H1 (cell line): ENCODE measurements at regions of chr13 and their contacts with region 1.

Region 1: GRCh38 chr13:51286135-51287002 is 53.1 kb upstream of the SERPINE3 start:
- DNase-seq: peak; percentile 63 to 96
- H3K4me3 ChIP-seq: no peak overlapping the region
- H3K27ac ChIP-seq: no peak overlapping the region
- H3K4me1 ChIP-seq: peaks cover 0 to 3% (median 0%) of the 10 kb centered on the region in 4 experiments; a peak in 2 of 7 replicates
- H3K27me3 ChIP-seq: no peaks in the 10 kb centered on the region
- CTCF ChIP-seq: peak; percentile 86 to 95 (median 92)
- EP300 ChIP-seq: no peak
- POLR2A ChIP-seq: no peak
- RAD21 ChIP-seq: peak; percentile 93

Region 2: DNA sequence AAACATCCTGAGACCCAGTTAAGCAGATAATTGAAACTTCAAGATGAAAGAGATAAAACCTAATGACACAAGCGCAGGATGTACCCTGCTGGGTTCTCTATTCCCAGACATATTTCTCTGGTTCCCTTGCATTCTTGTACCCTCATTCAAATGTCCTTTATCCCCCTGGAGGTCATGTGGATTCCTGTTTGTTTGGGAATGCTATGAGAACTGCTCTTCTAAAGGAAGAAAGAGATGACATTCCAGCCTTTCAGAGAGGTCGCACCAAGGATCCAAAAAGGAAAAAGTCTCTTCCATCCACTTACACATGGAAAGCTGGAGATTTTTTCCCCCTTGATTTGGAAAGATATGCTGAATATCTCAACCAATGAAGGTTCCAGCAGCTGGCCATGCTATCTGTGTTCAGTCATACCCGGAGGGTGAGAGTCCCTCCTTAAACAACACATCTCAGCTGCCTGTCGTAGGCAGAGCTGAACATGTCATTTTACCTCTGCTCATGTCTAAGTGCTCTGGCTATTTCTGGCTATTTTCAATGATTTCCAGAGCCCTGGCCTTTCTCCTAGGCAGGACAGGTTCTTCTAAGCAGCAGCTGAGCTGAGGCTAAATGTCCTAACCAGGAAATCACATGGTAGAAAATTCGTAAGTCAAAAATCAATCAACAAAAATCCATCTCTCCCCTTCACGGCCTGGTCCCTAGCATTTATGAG is 227.8 kb before region 1 on chr13:
- CTCF ChIA-PET with region 1: no interaction called
- POLR2A ChIA-PET with region 1: no interaction called
- DNase-seq: peak in 1 of 2 experiments; percentile 38
- H3K4me3 ChIP-seq: no peak overlapping the region
- H3K27ac ChIP-seq: no peak overlapping the region
- H3K4me1 ChIP-seq: peaks cover 0 to 6% (median 2%) of the 10 kb centered on the region in 4 experiments; a peak in 3 of 7 replicates
- H3K27me3 ChIP-seq: no peaks in the 10 kb centered on the region
- CTCF ChIP-seq: no peak
- EP300 ChIP-seq: no peak
- POLR2A ChIP-seq: no peak
- RAD21 ChIP-seq: no peak

Region 3: GRCh38 chr13:51154029-51154555 is 132.3 kb before region 1 on chr13:
- CTCF ChIA-PET with region 1: interaction called, 100 read pairs
- POLR2A ChIA-PET with region 1: interaction called, 11 read pairs
- DNase-seq: peak in 1 of 2 experiments; percentile 31
- H3K4me3 ChIP-seq: no peak overlapping the region
- H3K27ac ChIP-seq: no peak overlapping the region
- H3K4me1 ChIP-seq: peaks cover 8 to 23% (median 18%) of the 10 kb centered on the region in 4 experiments; a peak in 6 of 7 replicates
- H3K27me3 ChIP-seq: no peaks in the 10 kb centered on the region
- CTCF ChIP-seq: no peak
- EP300 ChIP-seq: no peak
- POLR2A ChIP-seq: no peak
- RAD21 ChIP-seq: no peak

Region 4: DNA sequence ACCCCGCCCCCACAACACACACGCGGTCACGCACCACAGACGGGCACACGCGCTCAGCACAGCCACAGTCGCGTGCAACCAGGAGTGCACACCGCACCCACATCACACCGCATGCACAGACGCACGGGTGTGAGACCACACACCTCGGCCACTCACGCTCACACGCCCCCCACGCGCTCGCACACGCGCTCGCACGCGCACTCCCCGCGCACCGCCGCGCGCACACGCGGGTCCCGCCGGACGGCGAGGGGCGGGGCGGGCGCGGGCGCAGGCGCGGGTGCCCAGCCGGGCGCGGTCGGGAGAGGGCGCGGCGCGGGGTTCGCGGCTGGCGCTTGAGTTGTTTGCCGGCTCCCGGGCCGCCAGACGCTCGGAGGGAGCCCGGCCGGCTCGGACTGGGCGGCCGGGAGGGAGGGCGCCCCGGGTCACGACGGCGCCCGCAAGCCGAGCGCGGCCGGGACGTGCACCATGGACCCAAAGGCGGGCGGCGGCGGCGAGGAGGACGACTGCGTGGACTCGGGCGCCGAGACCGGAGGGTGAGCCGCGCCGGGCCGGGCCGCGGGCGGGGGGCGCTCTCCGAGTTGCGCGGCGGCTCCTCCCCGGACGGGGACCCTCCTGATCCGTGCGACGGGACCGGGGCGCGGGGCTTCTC is 64.2 kb before region 1 on chr13 and contains the start of gene FAM124A:
- CTCF ChIA-PET with region 1: interaction called, 38 read pairs
- POLR2A ChIA-PET with region 1: interaction called, 13 read pairs
- DNase-seq: peak in 1 of 2 experiments; percentile 80
- H3K4me3 ChIP-seq: peak within 1 kb of the TSS; percentile 80 to 96 (median 89)
- H3K27ac ChIP-seq: peak within 1 kb of the TSS; percentile 24; the same call in 1 of the 2 replicates
- H3K4me1 ChIP-seq: peaks cover 6 to 23% (median 22%) of the 10 kb centered on the region in 4 experiments
- H3K27me3 ChIP-seq: no peaks in the 10 kb centered on the region
- CTCF ChIP-seq: peak; percentile 10 to 71 (median 46); a peak in 3 of 4 replicates
- EP300 ChIP-seq: no peak
- POLR2A ChIP-seq: peak in 1 of 2 experiments; percentile 42; a peak in 2 of 3 replicates
- RAD21 ChIP-seq: peak in 1 of 2 experiments; percentile 43; a peak in 2 of 4 replicates
- total RNA-seq, gene FAM124A: 47.1 and 49.9 TPM in 2 replicates

Region 5: GRCh38 chr13:51262501-51263211 is 23.7 kb before region 1 on chr13:
- CTCF ChIA-PET with region 1: interaction called, 93 read pairs
- POLR2A ChIA-PET with region 1: interaction called, 6 read pairs
- DNase-seq: no peak
- H3K4me3 ChIP-seq: no peak overlapping the region
- H3K27ac ChIP-seq: no peak overlapping the region
- H3K4me1 ChIP-seq: peaks cover 5 to 22% (median 14%) of the 10 kb centered on the region in 4 experiments; a peak in 6 of 7 replicates
- H3K27me3 ChIP-seq: no peaks in the 10 kb centered on the region
- CTCF ChIP-seq: no peak
- EP300 ChIP-seq: no peak
- POLR2A ChIP-seq: no peak
- RAD21 ChIP-seq: no peak

Region 6: DNA sequence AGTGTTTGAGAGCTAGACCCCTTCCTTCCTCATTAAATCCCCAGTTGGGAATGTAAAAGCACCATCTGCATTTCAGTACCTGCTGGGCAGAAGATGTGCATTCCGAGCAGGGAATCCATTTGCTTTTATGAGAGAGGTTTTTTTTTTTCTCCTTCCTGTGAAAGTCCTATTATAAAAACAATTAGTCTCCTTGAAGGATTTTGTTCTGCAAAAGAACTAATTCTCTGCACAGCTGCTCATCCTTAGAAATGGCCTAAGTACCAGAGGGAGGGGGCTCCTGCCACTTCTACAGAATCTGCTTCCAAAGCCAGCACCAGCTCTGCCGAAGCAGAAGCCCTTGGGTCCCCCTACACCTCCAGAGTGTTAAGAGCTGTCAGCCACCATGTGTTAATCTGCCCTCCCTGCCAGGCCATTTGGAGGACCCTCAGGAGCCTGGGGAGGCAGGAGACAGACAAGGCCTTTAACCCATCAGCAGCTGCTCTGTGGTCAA is 16.7 kb after region 1 on chr13:
- CTCF ChIA-PET with region 1: interaction called, 52 read pairs
- POLR2A ChIA-PET with region 1: interaction called, 19 read pairs
- DNase-seq: peak in 1 of 2 experiments; percentile 75
- H3K4me3 ChIP-seq: peak overlapping the region in 1 of 4 experiments; percentile 23; a peak in 1 of 8 replicates
- H3K27ac ChIP-seq: peak overlapping the region; percentile 33; the same call in 1 of the 2 replicates
- H3K4me1 ChIP-seq: peaks cover 11 to 32% (median 28%) of the 10 kb centered on the region in 4 experiments
- H3K27me3 ChIP-seq: no peaks in the 10 kb centered on the region
- CTCF ChIP-seq: no peak
- EP300 ChIP-seq: peak in 1 of 2 experiments; percentile 65; a peak in 1 of 3 replicates
- POLR2A ChIP-seq: no peak
- RAD21 ChIP-seq: no peak; a peak in 1 of 4 replicates

Region 7: DNA sequence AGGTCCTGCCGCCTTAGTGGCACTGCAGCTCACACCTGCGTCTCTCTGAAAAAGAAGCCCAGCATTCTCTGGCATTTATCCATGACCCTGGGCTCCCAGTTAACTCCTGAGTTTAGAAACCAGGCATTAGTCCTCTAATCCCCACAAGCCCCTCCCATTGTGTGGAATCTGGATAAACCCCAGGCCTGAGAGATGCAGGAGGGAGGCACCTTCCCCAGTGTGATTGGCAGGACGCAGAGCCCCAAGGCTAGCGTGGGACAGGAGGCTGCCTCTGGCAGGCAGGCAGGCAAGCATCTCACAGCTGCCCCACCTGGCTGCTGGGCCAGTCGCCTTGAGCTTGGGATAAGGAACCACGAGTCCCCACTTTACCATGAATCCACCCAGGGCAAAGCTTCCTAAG is 42.1 kb after region 1 on chr13:
- CTCF ChIA-PET with region 1: interaction called, 16 read pairs
- POLR2A ChIA-PET with region 1: interaction called, 3 read pairs
- DNase-seq: peak; percentile 76 to 77
- H3K4me3 ChIP-seq: no peak overlapping the region
- H3K27ac ChIP-seq: no peak overlapping the region
- H3K4me1 ChIP-seq: peaks cover 4 to 16% (median 15%) of the 10 kb centered on the region in 4 experiments; a peak in 6 of 7 replicates
- H3K27me3 ChIP-seq: no peaks in the 10 kb centered on the region; a peak in 1 of 7 replicates
- CTCF ChIP-seq: peak; percentile 15 to 37 (median 29); a peak in 2 of 4 replicates
- EP300 ChIP-seq: no peak
- POLR2A ChIP-seq: no peak
- RAD21 ChIP-seq: peak; percentile 37 to 41